ENCODE measurements at regions of chr3 and their contacts with region 1.

Region 1: GRCh38 chr3:107927361-107928083 is 163.3 kb downstream of the CD47 start:
- DNase-seq: peak; percentile 62 to 82
- ATAC-seq: peak; percentile 99
- H3K4me3 ChIP-seq: peak overlapping the region; percentile 61
- H3K27ac ChIP-seq: peak overlapping the region; percentile 41 to 58; a peak in 5 of 6 replicates
- H3K4me1 ChIP-seq: no peaks in the 10 kb centered on the region
- CTCF ChIP-seq: peak; percentile 90
- EP300 ChIP-seq: no peak
- POLR2A ChIP-seq: no peak
- RAD21 ChIP-seq: peak; percentile 63 to 79

Region 2: GRCh38 chr3:107897471-107898061 is 30.0 kb before region 1 on chr3:
- CTCF ChIA-PET with region 1: interaction called, 11 read pairs
- POLR2A ChIA-PET with region 1: no interaction called
- DNase-seq: no peak
- ATAC-seq: no peak
- H3K4me3 ChIP-seq: no peak overlapping the region
- H3K27ac ChIP-seq: no peak overlapping the region
- H3K4me1 ChIP-seq: no peaks in the 10 kb centered on the region
- CTCF ChIP-seq: no peak
- EP300 ChIP-seq: no peak
- POLR2A ChIP-seq: no peak
- RAD21 ChIP-seq: no peak

Region 3: DNA sequence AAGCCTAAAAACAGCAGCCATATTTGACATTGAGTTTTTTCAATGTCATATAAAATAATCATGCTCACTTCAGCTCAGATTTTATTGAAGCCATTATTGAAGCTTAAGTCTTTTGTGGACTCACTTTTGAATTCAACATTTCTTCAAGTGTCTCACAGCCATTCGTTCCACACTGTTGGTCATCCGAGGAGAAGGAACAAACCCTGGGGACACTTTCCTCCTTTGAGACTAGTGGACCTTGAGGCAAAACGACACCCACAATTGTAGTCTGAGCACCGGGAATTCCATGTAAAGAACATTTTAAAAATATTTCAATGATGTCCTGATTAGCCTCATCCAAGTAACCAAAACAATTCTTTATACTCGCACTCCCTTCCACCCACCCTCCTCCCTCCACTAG is 11.4 kb before region 1 on chr3:
- CTCF ChIA-PET with region 1: interaction called, 22 read pairs
- POLR2A ChIA-PET with region 1: no interaction called
- DNase-seq: no peak
- ATAC-seq: no peak
- H3K4me3 ChIP-seq: no peak overlapping the region
- H3K27ac ChIP-seq: no peak overlapping the region
- H3K4me1 ChIP-seq: no peaks in the 10 kb centered on the region
- CTCF ChIP-seq: no peak
- EP300 ChIP-seq: no peak
- POLR2A ChIP-seq: no peak
- RAD21 ChIP-seq: no peak

Region 4: GRCh38 chr3:107945417-107946094 is 18.0 kb after region 1 on chr3:
- CTCF ChIA-PET with region 1: interaction called, 11 read pairs
- POLR2A ChIA-PET with region 1: no interaction called
- DNase-seq: no peak
- ATAC-seq: no peak
- H3K4me3 ChIP-seq: no peak overlapping the region
- H3K27ac ChIP-seq: no peak overlapping the region
- H3K4me1 ChIP-seq: no peaks in the 10 kb centered on the region
- CTCF ChIP-seq: no peak
- EP300 ChIP-seq: no peak
- POLR2A ChIP-seq: no peak
- RAD21 ChIP-seq: no peak

Region 5: DNA sequence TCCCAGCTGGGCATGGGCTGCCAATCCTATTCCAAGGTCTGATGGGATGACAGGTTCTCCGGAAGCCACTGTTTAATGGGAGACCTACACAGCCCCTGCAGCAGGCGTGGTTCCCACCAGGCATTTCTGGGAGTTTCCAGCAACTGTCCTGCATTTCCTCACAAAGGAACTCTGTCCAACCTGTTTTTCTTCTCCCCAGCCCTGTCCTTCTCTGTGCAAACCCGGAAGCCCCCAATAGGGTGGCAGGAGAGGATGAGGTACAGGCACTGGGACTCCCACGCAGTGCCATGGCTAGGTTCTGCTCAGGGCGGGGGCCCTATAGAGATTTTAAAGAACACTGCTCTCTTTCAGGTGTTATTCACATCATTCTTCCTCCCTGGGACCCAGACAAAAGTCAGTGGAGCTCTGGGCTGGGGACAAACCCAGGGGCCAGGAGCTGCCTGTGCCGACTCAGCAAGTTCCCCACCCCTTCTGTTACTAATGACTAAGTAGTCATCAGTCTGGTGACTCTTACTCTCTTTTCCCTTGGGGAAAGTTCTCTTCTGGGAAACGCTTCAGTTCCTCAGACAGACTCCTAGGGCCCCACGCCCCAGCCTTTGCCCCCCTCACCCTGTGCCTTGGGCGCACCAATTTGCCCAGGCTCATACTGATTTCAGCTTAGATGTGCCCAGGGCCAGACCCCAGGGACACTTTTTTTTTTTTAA is 65.6 kb after region 1 on chr3:
- CTCF ChIA-PET with region 1: interaction called, 11 read pairs
- POLR2A ChIA-PET with region 1: no interaction called
- DNase-seq: peak in 1 of 2 experiments; percentile 7
- ATAC-seq: peak; percentile 35 to 57; a peak in 3 of 6 replicates
- H3K4me3 ChIP-seq: no peak overlapping the region
- H3K27ac ChIP-seq: peak overlapping the region in 1 of 2 experiments; percentile 26; a peak in 2 of 6 replicates
- H3K4me1 ChIP-seq: peaks cover 33% of the 10 kb centered on the region
- CTCF ChIP-seq: no peak
- EP300 ChIP-seq: no peak
- POLR2A ChIP-seq: no peak
- RAD21 ChIP-seq: no peak

Region 6: GRCh38 chr3:108215871-108216270 is 288.3 kb after region 1 on chr3:
- CTCF ChIA-PET with region 1: no interaction called
- POLR2A ChIA-PET with region 1: no interaction called
- DNase-seq: no peak
- ATAC-seq: no peak
- H3K4me3 ChIP-seq: no peak overlapping the region
- H3K27ac ChIP-seq: no peak overlapping the region
- H3K4me1 ChIP-seq: peaks cover 9% of the 10 kb centered on the region; the same call in 2 of the 3 replicates
- CTCF ChIP-seq: no peak
- EP300 ChIP-seq: no peak
- POLR2A ChIP-seq: no peak
- RAD21 ChIP-seq: no peak

Measured in A549 (cell line).